IMR-90 (cell line): ENCODE measurements at regions of chr2 and their contacts with region 1.

Region 1: DNA sequence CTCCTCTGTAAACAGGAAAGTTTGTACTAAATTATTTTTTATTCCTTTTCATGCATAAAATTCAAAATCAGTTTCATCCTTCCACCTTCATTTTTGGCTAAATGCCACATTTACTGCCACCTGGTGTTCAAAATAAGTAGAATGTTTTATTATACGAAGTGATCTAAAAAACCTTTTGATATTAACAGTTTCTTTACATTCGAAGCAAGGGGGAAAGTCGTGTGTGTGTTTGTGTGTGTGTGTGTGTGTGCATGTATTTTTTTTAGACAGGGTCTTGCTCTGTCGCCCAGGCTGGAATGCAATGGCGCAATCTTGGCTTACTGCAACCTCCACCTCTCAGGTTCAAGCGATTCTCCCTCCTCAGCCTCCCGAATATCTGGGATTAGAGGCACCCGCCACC is 9.0 kb upstream of the SCN9A start:
- DNase-seq: peak; percentile 52
- ATAC-seq: no peak
- H3K4me3 ChIP-seq: no peak overlapping the region
- H3K27ac ChIP-seq: no peak overlapping the region
- H3K4me1 ChIP-seq: no peaks in the 10 kb centered on the region
- H3K27me3 ChIP-seq: no peaks in the 10 kb centered on the region
- CTCF ChIP-seq: peak; percentile 52
- POLR2A ChIP-seq: no peak
- RAD21 ChIP-seq: peak; percentile 43

Region 2: GRCh38 chr2:165787334-165787733 is 597.4 kb before region 1 on chr2:
- CTCF ChIA-PET with region 1: no interaction called
- POLR2A ChIA-PET with region 1: no interaction called
- dilution Hi-C with region 1: no loop called
- in situ Hi-C with region 1: no loop called
- intact Hi-C with region 1: loop called (anchors 5 kb)
- DNase-seq: peak; percentile 41
- ATAC-seq: no peak; the same call in 1 of the 2 replicates
- H3K4me3 ChIP-seq: no peak overlapping the region
- H3K27ac ChIP-seq: no peak overlapping the region
- H3K4me1 ChIP-seq: 0 out of 2 replicates have a peak, but pooled peaks cover 3% of the 10 kb centered on the region
- H3K27me3 ChIP-seq: no peaks in the 10 kb centered on the region
- CTCF ChIP-seq: no peak
- POLR2A ChIP-seq: no peak
- RAD21 ChIP-seq: no peak

Region 3: GRCh38 chr2:166284359-166284758 is 100.4 kb before region 1 on chr2:
- CTCF ChIA-PET with region 1: no interaction called
- POLR2A ChIA-PET with region 1: no interaction called
- dilution Hi-C with region 1: no loop called
- in situ Hi-C with region 1: no loop called
- intact Hi-C with region 1: no loop called
- DNase-seq: no peak
- ATAC-seq: no peak
- H3K4me3 ChIP-seq: no peak overlapping the region
- H3K27ac ChIP-seq: no peak overlapping the region
- H3K4me1 ChIP-seq: no peaks in the 10 kb centered on the region
- H3K27me3 ChIP-seq: no peaks in the 10 kb centered on the region
- CTCF ChIP-seq: no peak
- POLR2A ChIP-seq: no peak
- RAD21 ChIP-seq: no peak